Caco-2 (cell line): ENCODE measurements at regions of chr11 and their contacts with region 1.

Region 1: DNA sequence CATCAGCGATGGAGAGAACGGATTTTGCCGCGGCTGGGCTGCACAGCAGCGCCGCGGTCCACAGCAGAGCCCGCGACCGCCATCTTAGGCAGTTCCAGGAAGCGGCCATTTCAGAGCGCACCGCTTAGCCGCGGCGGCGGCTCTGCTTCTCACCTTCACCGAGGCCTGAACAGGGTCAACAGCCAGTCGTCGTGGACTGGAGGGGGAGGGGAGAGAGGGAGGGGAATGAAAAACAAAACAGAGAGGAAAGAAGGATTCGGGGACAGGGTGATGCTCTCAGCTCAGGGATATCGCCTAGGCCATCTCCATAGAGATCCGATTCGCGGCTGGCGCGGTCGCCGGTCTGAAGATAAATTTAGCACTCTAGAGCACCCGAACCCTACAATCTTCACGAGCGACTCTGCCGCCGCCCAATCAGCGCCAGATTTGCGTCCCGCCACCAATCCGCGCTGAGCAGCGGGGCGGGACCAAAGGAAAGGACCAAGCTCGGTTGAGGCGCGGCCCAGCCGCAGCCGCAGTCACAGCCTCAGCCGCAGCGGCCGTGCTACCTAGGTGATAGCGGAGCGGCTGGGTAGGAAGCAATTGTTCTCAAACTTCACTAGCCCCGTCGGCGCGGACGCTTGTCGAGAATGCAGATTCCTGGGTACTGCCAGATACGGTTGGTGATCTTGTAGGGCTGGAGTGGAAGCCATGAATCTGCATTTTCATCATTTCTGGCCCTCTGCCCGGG is at the start of gene ZBED5:
- DNase-seq: peak; percentile 96 to 97
- H3K4me3 ChIP-seq: peak within 1 kb of the TSS; percentile 90
- H3K4me3 Mint-ChIP-seq: peak within 1 kb of the TSS; percentile 97
- H3K27ac Mint-ChIP-seq: peak within 1 kb of the TSS; percentile 96
- H3K4me1 ChIP-seq: peaks cover 7% of the 10 kb centered on the region; the same call in 1 of the 2 replicates
- H3K4me1 Mint-ChIP-seq: peaks cover 13% of the 10 kb centered on the region
- H3K27me3 ChIP-seq: no peaks in the 10 kb centered on the region
- H3K27me3 Mint-ChIP-seq: no peaks in the 10 kb centered on the region
- CTCF ChIP-seq: peak; percentile 23 to 29
- total RNA-seq, gene ZBED5: 42.1 and 53.2 TPM in 2 replicates

Region 2: GRCh38 chr11:10750838-10751580 is 106.9 kb before region 1 on chr11 and contains the start of gene CTR9:
- CTCF ChIA-PET with region 1: no interaction called
- POLR2A ChIA-PET with region 1: interaction called, 14 read pairs
- intact Hi-C with region 1: no loop called
- DNase-seq: peak; percentile 96 to 97
- H3K4me3 ChIP-seq: peak within 1 kb of the TSS; percentile 70
- H3K4me3 Mint-ChIP-seq: peak within 1 kb of the TSS; percentile 91
- H3K27ac Mint-ChIP-seq: peak within 1 kb of the TSS; percentile 90
- H3K4me1 ChIP-seq: peaks cover 13% of the 10 kb centered on the region; the same call in 1 of the 2 replicates
- H3K4me1 Mint-ChIP-seq: peaks cover 6% of the 10 kb centered on the region
- H3K27me3 ChIP-seq: no peaks in the 10 kb centered on the region
- H3K27me3 Mint-ChIP-seq: no peaks in the 10 kb centered on the region
- CTCF ChIP-seq: peak in 1 of 2 experiments; percentile 50
- total RNA-seq, gene CTR9: 51.1 and 54.0 TPM in 2 replicates

Region 3: GRCh38 chr11:10844356-10844755 is 13.5 kb before region 1 on chr11:
- CTCF ChIA-PET with region 1: no interaction called
- POLR2A ChIA-PET with region 1: interaction called, 13 read pairs
- intact Hi-C with region 1: loop called (anchors 1 kb)
- DNase-seq: no peak
- H3K4me3 ChIP-seq: no peak overlapping the region
- H3K4me3 Mint-ChIP-seq: no peak overlapping the region
- H3K27ac Mint-ChIP-seq: no peak overlapping the region
- H3K4me1 ChIP-seq: peaks cover 29% of the 10 kb centered on the region
- H3K4me1 Mint-ChIP-seq: peaks cover 11% of the 10 kb centered on the region
- H3K27me3 ChIP-seq: no peaks in the 10 kb centered on the region
- H3K27me3 Mint-ChIP-seq: no peaks in the 10 kb centered on the region
- CTCF ChIP-seq: no peak

Region 4: DNA sequence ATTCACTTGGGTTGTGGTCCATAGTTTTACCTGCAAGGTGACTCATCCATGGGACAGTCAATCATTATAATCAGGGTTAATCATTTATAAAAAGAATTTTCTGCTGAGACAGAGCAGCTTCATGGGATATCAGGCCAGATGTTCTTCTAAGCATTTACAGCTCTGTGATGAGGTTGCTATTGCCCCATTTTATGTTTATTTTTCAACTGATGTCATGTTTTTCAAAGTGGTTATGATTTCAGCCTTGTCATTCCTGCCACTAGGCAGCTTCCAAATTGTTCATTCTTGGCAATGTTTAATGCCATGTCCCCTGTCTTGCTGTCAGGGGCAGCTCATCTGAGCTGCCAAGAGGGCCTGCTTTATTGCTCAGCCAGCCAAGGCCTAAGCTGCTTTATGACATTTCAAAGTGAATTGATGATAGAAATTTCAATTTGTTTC is 35.9 kb after region 1 on chr11:
- CTCF ChIA-PET with region 1: interaction called, 9 read pairs
- POLR2A ChIA-PET with region 1: interaction called, 13 read pairs
- intact Hi-C with region 1: no loop called
- DNase-seq: peak; percentile 63 to 78
- H3K4me3 ChIP-seq: no peak overlapping the region
- H3K4me3 Mint-ChIP-seq: no peak overlapping the region
- H3K27ac Mint-ChIP-seq: peak overlapping the region; percentile 77
- H3K4me1 ChIP-seq: peaks cover 32% of the 10 kb centered on the region
- H3K4me1 Mint-ChIP-seq: peaks cover 32% of the 10 kb centered on the region
- H3K27me3 ChIP-seq: no peaks in the 10 kb centered on the region
- H3K27me3 Mint-ChIP-seq: no peaks in the 10 kb centered on the region
- CTCF ChIP-seq: peak; percentile 21 to 52

Region 5: GRCh38 chr11:10899121-10899830 is 41.4 kb after region 1 on chr11:
- CTCF ChIA-PET with region 1: interaction called, 9 read pairs
- POLR2A ChIA-PET with region 1: interaction called, 19 read pairs
- intact Hi-C with region 1: loop called (anchors 1 kb)
- DNase-seq: peak in 1 of 2 experiments; percentile 74
- H3K4me3 ChIP-seq: no peak overlapping the region
- H3K4me3 Mint-ChIP-seq: peak overlapping the region; percentile 55
- H3K27ac Mint-ChIP-seq: peak overlapping the region; percentile 86
- H3K4me1 ChIP-seq: peaks cover 39% of the 10 kb centered on the region
- H3K4me1 Mint-ChIP-seq: peaks cover 58% of the 10 kb centered on the region
- H3K27me3 ChIP-seq: no peaks in the 10 kb centered on the region
- H3K27me3 Mint-ChIP-seq: no peaks in the 10 kb centered on the region
- CTCF ChIP-seq: no peak

Region 6: DNA sequence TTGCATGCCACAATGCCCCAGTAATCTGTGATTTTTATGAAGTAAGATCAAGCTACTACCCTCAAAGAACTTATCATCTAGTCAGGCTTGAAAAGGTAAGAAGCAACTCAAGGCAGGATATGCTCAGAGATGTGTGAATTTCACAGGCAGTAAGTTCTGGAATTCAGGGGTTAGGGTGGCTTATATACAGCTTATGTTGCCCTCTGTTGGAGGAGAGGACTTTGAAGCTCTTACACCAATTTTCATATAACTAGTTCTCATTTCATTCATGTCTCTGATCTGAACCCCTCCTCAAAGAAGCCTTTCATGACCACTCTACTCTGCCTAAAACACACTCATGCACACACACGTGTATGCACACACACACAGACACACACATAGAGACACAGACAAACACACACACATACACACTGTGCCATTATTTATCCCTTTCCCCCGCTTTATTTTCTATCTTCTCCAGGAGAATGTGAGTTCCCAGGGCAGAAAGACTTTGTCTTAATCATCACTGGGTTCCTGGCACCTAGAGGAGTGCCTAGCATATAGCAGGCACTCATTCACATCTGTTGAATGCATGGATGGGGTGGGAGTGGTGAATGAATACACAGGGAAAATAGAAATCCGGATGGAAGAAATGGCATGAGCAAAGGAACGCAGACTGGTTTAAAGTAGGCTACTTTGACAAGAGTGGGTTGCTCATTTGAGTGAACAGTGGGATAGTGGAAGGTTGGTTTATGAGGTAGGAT is 220.6 kb after region 1 on chr11:
- CTCF ChIA-PET with region 1: no interaction called
- POLR2A ChIA-PET with region 1: no interaction called
- intact Hi-C with region 1: no loop called
- DNase-seq: no peak
- H3K4me3 ChIP-seq: no peak overlapping the region
- H3K4me3 Mint-ChIP-seq: no peak overlapping the region
- H3K27ac Mint-ChIP-seq: no peak overlapping the region
- H3K4me1 ChIP-seq: no peaks in the 10 kb centered on the region
- H3K4me1 Mint-ChIP-seq: peaks cover under 1% of the 10 kb centered on the region
- H3K27me3 ChIP-seq: no peaks in the 10 kb centered on the region; the same call in 1 of the 2 replicates
- H3K27me3 Mint-ChIP-seq: peaks cover 14% of the 10 kb centered on the region
- CTCF ChIP-seq: no peak

Region 7: GRCh38 chr11:11436715-11437313 is 578.9 kb after region 1 on chr11:
- CTCF ChIA-PET with region 1: no interaction called
- POLR2A ChIA-PET with region 1: no interaction called
- intact Hi-C with region 1: no loop called
- DNase-seq: no peak
- H3K4me3 ChIP-seq: no peak overlapping the region
- H3K4me3 Mint-ChIP-seq: no peak overlapping the region
- H3K27ac Mint-ChIP-seq: no peak overlapping the region
- H3K4me1 ChIP-seq: no peaks in the 10 kb centered on the region
- H3K4me1 Mint-ChIP-seq: no peaks in the 10 kb centered on the region
- H3K27me3 ChIP-seq: no peaks in the 10 kb centered on the region
- H3K27me3 Mint-ChIP-seq: peaks cover 11% of the 10 kb centered on the region
- CTCF ChIP-seq: no peak